ENCODE measurements at regions of chr4 and their contacts with region 1.

Region 1: DNA sequence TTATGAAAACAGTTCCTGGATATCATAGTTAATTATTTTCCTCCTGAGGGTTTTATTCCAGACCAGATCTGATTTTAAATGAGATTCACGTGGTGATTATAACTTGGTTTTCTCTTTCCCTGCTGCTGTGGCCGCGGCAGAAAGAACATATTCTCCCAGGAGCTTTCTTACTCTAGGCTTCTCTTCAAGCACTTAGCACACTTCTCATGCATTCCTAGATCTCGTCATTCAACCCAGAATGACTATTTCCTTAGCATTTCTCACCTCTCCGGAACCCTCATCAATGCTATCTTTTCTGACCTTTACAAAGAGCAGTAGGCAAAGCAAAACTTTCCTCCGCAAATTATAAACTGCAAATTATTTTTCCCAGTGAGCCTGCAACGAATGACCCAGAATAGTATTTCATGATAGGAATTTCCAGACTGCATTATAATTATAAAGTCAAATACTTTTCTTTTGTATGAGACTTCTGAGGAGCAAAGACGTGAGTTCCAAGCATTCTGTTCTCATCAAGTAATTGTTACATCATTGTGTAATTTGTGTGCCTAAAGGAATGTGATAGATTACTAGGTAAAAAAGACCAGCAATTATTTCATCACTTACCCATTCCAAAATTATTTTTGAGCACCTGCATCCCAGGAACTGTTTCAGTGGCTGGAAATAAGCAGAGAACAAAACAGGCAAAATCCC is 123.0 kb downstream of the GPAT3 start:
- DNase-seq: no peak
- H3K4me3 ChIP-seq: no peak overlapping the region
- H3K27ac ChIP-seq: no peak overlapping the region
- H3K4me1 ChIP-seq: no peaks in the 10 kb centered on the region
- H3K27me3 ChIP-seq: no peaks in the 10 kb centered on the region
- CTCF ChIP-seq: no peak
- POLR2A ChIP-seq: no peak

Region 2: GRCh38 chr4:84511703-84512102 is 852.8 kb after region 1 on chr4:
- intact Hi-C with region 1: loop called (anchors 10 kb)
- DNase-seq: no peak
- H3K4me3 ChIP-seq: no peak overlapping the region
- H3K27ac ChIP-seq: no peak overlapping the region
- H3K4me1 ChIP-seq: peaks cover 0 to 9% (median 0%) of the 10 kb centered on the region in 3 donors
- H3K27me3 ChIP-seq: peaks cover 0 to 43% (median 0%) of the 10 kb centered on the region in 4 donors
- CTCF ChIP-seq: no peak
- POLR2A ChIP-seq: no peak

Measured in esophagus squamous epithelium (tissue), 5 donors.